GM10248 (cell line): ENCODE measurements at regions of chr6 and their contacts with region 1.

Region 1: DNA sequence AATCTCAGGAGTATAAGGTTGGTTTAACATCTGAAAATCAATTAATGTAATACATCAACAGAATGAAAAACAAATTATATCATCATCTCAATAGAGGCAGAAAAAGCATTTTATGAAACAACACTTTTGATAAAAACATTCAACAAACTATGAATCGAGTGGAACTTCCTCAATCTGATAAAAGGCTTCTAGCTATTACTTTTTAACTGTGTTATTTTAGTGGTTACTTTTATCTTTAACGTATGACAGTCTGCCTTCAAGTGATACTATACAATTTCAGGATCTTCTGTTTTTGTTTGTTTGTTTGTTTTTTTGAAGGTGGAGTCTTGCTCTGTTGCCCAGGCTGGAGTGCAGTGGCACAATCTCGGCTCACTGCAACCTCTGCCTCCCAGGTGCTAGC is 73.7 kb downstream of the ZFAND3 start:
- DNase-seq: no peak
- CTCF ChIP-seq: no peak

Region 2: GRCh38 chr6:37903351-37904340 is 10.4 kb after region 1 on chr6:
- CTCF ChIA-PET with region 1: interaction called, 10 read pairs
- POLR2A ChIA-PET with region 1: no interaction called
- DNase-seq: no peak
- CTCF ChIP-seq: no peak